ENCODE measurements at regions of chr15 and their contacts with region 1.

Region 1: GRCh38 chr15:66386204-66387123 is at the start of gene MAP2K1:
- DNase-seq: peak; percentile 98
- ATAC-seq: peak; percentile 91
- H3K4me3 ChIP-seq: peak within 1 kb of the TSS; percentile 59 to 78 (median 75)
- H3K4me3 Mint-ChIP-seq: peak within 1 kb of the TSS; percentile 92
- H3K27ac ChIP-seq: peak within 1 kb of the TSS; percentile 61 to 78
- H3K27ac Mint-ChIP-seq: peak within 1 kb of the TSS; percentile 94
- H3K4me1 ChIP-seq: peaks cover 47 to 50% of the 10 kb centered on the region in 2 donors
- H3K4me1 Mint-ChIP-seq: peaks cover 46% of the 10 kb centered on the region
- H3K27me3 ChIP-seq: no peaks in the 10 kb centered on the region
- H3K27me3 Mint-ChIP-seq: no peaks in the 10 kb centered on the region
- CTCF ChIP-seq: peak; percentile 80
- total RNA-seq, gene MAP2K1: 50.3 and 52.3 TPM in 2 replicates

Region 2: DNA sequence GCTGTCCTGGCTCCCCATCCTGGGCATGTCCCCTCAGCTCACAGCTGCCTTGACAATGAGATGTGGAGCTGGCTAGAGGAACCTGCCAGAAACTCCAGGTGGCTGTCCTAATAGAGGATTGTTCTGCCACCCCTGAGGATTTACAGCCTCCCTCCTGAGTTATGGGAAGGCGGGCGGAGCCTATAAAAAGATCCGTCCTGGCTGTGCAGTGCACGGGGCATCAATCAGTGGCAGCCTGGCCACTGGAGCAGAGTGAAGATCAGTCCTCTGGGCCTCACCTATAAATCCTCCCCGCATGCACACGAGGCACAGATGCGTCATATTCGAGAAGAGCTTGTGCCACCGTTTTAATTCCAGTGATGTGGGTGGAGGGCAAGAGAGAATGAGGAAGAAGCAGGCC is 222.9 kb before region 1 on chr15:
- CTCF ChIA-PET with region 1: no interaction called
- POLR2A ChIA-PET with region 1: no interaction called
- intact Hi-C with region 1: no loop called
- DNase-seq: no peak
- ATAC-seq: no peak
- H3K4me3 ChIP-seq: no peak overlapping the region
- H3K4me3 Mint-ChIP-seq: no peak overlapping the region
- H3K27ac ChIP-seq: no peak overlapping the region
- H3K27ac Mint-ChIP-seq: no peak overlapping the region
- H3K4me1 ChIP-seq: peaks cover 0 to 3% of the 10 kb centered on the region in 2 donors
- H3K4me1 Mint-ChIP-seq: no peaks in the 10 kb centered on the region
- H3K27me3 ChIP-seq: no peaks in the 10 kb centered on the region
- H3K27me3 Mint-ChIP-seq: peaks cover 7% of the 10 kb centered on the region
- CTCF ChIP-seq: no peak

Region 3: GRCh38 chr15:66293419-66294156 is 92.9 kb before region 1 on chr15 and contains the start of gene DIS3L:
- CTCF ChIA-PET with region 1: interaction called, 4 read pairs
- POLR2A ChIA-PET with region 1: no interaction called
- intact Hi-C with region 1: loop called (anchors 2 kb)
- DNase-seq: peak; percentile 84
- ATAC-seq: peak; percentile 80
- H3K4me3 ChIP-seq: peak within 1 kb of the TSS; percentile 50 to 90 (median 61)
- H3K4me3 Mint-ChIP-seq: peak within 1 kb of the TSS; percentile 89
- H3K27ac ChIP-seq: peak within 1 kb of the TSS; percentile 92 to 93
- H3K27ac Mint-ChIP-seq: peak within 1 kb of the TSS; percentile 93
- H3K4me1 ChIP-seq: peaks cover 20 to 26% of the 10 kb centered on the region in 2 donors
- H3K4me1 Mint-ChIP-seq: peaks cover 31% of the 10 kb centered on the region
- H3K27me3 ChIP-seq: no peaks in the 10 kb centered on the region
- H3K27me3 Mint-ChIP-seq: no peaks in the 10 kb centered on the region
- CTCF ChIP-seq: no peak
- total RNA-seq, gene DIS3L: 39.4 and 43.9 TPM in 2 replicates

Region 4: DNA sequence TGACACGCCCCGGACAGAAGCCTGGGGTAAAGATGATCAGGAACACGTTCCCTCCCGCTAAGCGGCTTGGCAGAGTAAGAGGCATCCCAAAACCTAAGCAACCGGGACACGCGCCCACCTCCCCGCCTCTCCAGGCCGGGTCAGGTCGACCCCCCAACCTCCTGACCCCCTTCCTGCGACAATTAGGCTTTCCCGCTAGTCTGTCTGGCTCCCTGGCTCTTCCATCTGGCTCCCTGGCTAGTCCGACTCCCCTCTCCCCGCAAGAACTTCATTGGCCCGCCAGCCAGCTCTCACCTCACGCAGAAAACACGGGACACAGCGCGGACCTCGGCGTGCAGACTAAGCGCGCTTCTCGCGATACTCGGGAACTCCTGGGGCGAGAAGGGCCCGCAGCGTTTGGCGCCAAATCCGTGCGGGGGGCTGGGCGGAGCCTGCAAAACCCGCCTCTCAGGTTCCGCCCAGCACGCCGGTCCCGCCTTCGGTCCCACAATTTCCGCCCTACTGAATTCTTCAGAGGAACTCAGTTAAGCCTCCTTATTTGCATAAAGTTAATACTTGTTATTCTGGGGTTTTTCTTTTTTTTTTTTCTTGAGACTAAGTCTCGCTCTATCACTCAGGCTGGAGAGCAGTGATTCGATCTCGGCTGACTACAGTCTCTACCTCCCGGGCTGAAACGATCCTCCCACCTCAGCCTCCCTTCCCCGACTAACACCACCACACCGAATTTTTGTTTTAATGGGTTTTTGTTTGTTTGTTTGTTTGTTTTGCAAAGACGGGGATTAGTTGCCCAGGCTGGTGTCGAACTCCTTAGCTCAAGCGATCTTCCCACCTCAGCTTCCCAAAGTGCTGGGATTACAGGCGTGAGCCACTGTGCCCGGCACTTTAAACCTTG is 29.9 kb before region 1 on chr15 and contains the start of gene TIPIN:
- CTCF ChIA-PET with region 1: interaction called, 5 read pairs
- POLR2A ChIA-PET with region 1: interaction called, 7 read pairs
- intact Hi-C with region 1: loop called (anchors 1 kb)
- DNase-seq: peak; percentile 98
- ATAC-seq: peak; percentile 95
- H3K4me3 ChIP-seq: peak within 1 kb of the TSS; percentile 35 to 89 (median 84)
- H3K4me3 Mint-ChIP-seq: peak within 1 kb of the TSS; percentile 91
- H3K27ac ChIP-seq: peak within 1 kb of the TSS; percentile 58 to 71
- H3K27ac Mint-ChIP-seq: peak within 1 kb of the TSS; percentile 83
- H3K4me1 ChIP-seq: peaks cover 11 to 28% of the 10 kb centered on the region in 2 donors
- H3K4me1 Mint-ChIP-seq: peaks cover 24% of the 10 kb centered on the region
- H3K27me3 ChIP-seq: no peaks in the 10 kb centered on the region
- H3K27me3 Mint-ChIP-seq: no peaks in the 10 kb centered on the region
- CTCF ChIP-seq: no peak
- total RNA-seq, gene TIPIN: 8.8 and 8.9 TPM in 2 replicates

Region 5: GRCh38 chr15:66558300-66558699 is 171.8 kb after region 1 on chr15:
- CTCF ChIA-PET with region 1: no interaction called
- POLR2A ChIA-PET with region 1: no interaction called
- intact Hi-C with region 1: no loop called
- DNase-seq: no peak
- ATAC-seq: no peak
- H3K4me3 ChIP-seq: no peak overlapping the region
- H3K4me3 Mint-ChIP-seq: no peak overlapping the region
- H3K27ac ChIP-seq: no peak overlapping the region
- H3K27ac Mint-ChIP-seq: no peak overlapping the region
- H3K4me1 ChIP-seq: no peaks in the 10 kb centered on the region
- H3K4me1 Mint-ChIP-seq: no peaks in the 10 kb centered on the region
- H3K27me3 ChIP-seq: no peaks in the 10 kb centered on the region
- H3K27me3 Mint-ChIP-seq: no peaks in the 10 kb centered on the region
- CTCF ChIP-seq: no peak